CD8-positive, alpha-beta T cell (primary cell): ENCODE measurements at regions of chr10 and their contacts with region 1.

Region 1: DNA sequence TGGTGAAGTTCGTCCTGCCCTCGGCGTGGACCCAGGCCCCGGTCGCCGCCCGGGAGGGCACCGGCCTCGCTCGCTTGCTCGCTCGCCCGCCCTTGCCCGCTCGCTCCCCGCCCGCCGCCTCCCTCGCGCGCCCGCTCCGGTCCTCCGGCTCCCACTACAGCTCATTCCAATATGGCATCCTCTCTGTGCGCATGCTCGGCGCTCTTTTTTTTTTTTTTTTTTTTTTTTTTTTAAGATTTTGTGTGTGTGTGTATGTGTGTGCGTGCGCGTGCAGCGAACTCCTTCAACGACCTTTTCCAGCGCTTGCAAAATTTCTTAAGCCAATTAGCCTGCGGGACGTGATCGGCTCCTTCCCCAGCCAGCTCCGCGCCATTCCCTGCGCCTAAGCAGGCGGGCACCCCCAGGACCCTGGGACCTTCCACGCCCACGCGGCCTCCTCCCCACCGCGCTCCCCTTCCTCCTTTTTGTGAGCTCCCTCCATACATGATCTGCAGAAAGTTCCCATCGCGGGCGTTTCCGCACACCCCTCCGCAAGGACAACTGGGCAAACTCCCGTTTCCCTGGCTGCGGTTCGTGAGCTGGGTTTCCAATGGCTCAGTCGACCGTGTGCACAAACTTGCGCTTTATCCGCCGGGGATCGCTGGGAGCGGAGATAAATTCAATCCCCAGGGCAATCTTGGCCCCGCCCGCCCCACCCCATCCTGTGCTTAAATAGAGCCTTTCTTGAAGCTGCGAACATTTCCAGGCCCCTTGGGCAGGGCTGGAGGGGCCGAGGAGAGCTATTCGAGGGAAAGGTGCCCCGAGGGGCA is at the start of gene SFMBT2:
- DNase-seq: peak in 7 of 9 experiments; percentile 48 to 87 (median 67)
- ATAC-seq: peak; percentile 51
- H3K4me3 ChIP-seq: peak within 1 kb of the TSS; percentile 93 to 96
- H3K4me3 Mint-ChIP-seq: peak within 1 kb of the TSS; percentile 98
- H3K27ac ChIP-seq: peak within 1 kb of the TSS; percentile 52 to 81
- H3K27ac Mint-ChIP-seq: peak within 1 kb of the TSS; percentile 96
- H3K4me1 ChIP-seq: peaks cover 40% of the 10 kb centered on the region
- H3K4me1 Mint-ChIP-seq: peaks cover 44% of the 10 kb centered on the region
- H3K27me3 ChIP-seq: peaks cover 0 to 10% of the 10 kb centered on the region in 2 experiments
- H3K27me3 Mint-ChIP-seq: no peaks in the 10 kb centered on the region
- CTCF ChIP-seq: no peak
- total RNA-seq, gene SFMBT2: 27.5 to 30.3 TPM

Region 2: DNA sequence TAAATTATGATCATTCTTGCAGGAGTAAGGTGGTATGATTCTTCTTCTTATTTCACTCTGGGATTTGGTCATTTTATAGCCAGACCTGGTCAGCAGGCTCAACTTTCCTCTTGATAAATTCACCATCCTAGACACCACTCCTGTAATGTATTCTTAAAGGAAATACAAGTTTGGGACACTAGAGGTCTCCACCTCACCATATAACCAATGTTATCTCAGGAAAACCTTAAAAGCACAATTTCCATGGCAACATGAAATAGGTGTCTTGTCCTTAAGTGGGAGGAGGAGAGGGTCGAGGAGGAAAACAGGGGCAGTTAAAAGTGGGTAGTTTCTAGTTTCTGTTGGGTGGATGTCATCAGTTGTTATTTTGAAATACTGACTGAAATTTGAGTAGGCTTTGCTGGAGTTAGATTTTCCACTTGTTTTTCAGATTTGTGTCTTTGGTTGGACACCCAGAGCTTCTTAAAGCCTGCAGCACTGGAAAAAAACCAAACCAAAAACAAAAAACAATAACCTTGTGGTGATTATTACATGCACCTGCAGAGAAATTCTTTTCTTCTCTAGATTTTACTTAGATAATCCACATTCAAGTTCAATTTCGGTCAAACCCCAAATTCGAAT is 994.1 kb before region 1 on chr10:
- CTCF ChIA-PET with region 1: no interaction called
- POLR2A ChIA-PET with region 1: no interaction called
- intact Hi-C with region 1: loop called (anchors 5 to 10 kb)
- DNase-seq: peak in 2 of 9 experiments; percentile 65 to 75
- ATAC-seq: peak; percentile 72
- H3K4me3 ChIP-seq: no peak overlapping the region
- H3K4me3 Mint-ChIP-seq: no peak overlapping the region
- H3K27ac ChIP-seq: no peak overlapping the region
- H3K27ac Mint-ChIP-seq: no peak overlapping the region
- H3K4me1 ChIP-seq: no peaks in the 10 kb centered on the region
- H3K4me1 Mint-ChIP-seq: no peaks in the 10 kb centered on the region
- H3K27me3 ChIP-seq: no peaks in the 10 kb centered on the region
- H3K27me3 Mint-ChIP-seq: no peaks in the 10 kb centered on the region
- CTCF ChIP-seq: peak; percentile 74

Region 3: GRCh38 chr10:7192831-7193361 is 218.2 kb before region 1 on chr10:
- CTCF ChIA-PET with region 1: interaction called, 3 read pairs
- POLR2A ChIA-PET with region 1: interaction called, 3 read pairs
- intact Hi-C with region 1: loop called (anchors 2 kb)
- DNase-seq: peak; percentile 28 to 87 (median 68)
- ATAC-seq: peak; percentile 87
- H3K4me3 ChIP-seq: peak overlapping the region; percentile 16 to 36
- H3K4me3 Mint-ChIP-seq: peak overlapping the region; percentile 82
- H3K27ac ChIP-seq: peak overlapping the region; percentile 55 to 64
- H3K27ac Mint-ChIP-seq: peak overlapping the region; percentile 98
- H3K4me1 ChIP-seq: peaks cover 66% of the 10 kb centered on the region
- H3K4me1 Mint-ChIP-seq: peaks cover 67% of the 10 kb centered on the region
- H3K27me3 ChIP-seq: no peaks in the 10 kb centered on the region
- H3K27me3 Mint-ChIP-seq: no peaks in the 10 kb centered on the region
- CTCF ChIP-seq: no peak

Region 4: DNA sequence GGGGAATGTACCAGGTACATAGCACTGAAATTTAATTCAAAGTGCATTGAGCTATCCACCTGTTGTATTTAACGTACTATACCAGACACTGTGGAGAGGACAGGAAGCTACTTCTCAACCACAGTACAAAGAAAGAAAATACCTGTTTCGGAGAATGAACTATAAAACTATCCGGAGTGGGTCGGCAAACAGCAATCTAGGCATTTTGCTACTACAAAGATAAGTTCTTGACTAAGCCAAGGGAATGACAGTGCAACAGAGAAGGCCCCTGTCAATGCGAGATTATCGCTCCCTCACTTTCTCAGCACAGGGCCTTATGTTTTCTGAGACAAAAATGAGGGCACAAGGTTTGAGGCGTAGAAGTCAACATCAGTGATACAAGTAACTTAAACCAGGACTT is 27.6 kb before region 1 on chr10:
- CTCF ChIA-PET with region 1: interaction called, 12 read pairs
- POLR2A ChIA-PET with region 1: no interaction called
- intact Hi-C with region 1: loop called in 1 of 2 experiments (anchors 2 kb)
- DNase-seq: peak in 1 of 9 experiments; percentile 30
- ATAC-seq: peak; percentile 71
- H3K4me3 ChIP-seq: no peak overlapping the region
- H3K4me3 Mint-ChIP-seq: peak overlapping the region; percentile 3
- H3K27ac ChIP-seq: no peak overlapping the region
- H3K27ac Mint-ChIP-seq: peak overlapping the region; percentile 84
- H3K4me1 ChIP-seq: peaks cover 28% of the 10 kb centered on the region
- H3K4me1 Mint-ChIP-seq: peaks cover 62% of the 10 kb centered on the region
- H3K27me3 ChIP-seq: no peaks in the 10 kb centered on the region
- H3K27me3 Mint-ChIP-seq: no peaks in the 10 kb centered on the region
- CTCF ChIP-seq: no peak

Region 5: DNA sequence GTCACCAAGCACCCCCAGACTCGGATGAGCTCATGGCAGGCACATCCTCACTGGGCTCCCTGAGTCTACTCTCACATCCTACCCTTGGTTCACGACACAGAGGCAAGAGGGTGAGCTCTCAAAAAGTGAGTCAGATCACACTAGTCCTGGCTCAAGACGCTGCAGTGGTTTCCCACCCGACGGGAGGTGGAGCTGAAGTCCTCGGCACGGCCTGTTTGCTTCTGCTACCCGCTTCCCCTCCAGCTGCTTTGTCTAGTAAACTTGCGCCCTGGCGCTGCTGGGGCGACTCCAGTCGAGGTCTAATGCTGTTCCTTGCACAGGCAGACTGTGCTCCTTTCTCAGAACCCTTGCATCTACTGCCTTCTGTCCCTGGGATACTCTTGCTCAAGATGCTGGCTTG is 13.2 kb after region 1 on chr10:
- CTCF ChIA-PET with region 1: interaction called, 10 read pairs
- POLR2A ChIA-PET with region 1: interaction called, 3 read pairs
- intact Hi-C with region 1: no loop called
- DNase-seq: peak in 6 of 9 experiments; percentile 26 to 70 (median 58)
- ATAC-seq: peak; percentile 91
- H3K4me3 ChIP-seq: no peak overlapping the region
- H3K4me3 Mint-ChIP-seq: no peak overlapping the region
- H3K27ac ChIP-seq: no peak overlapping the region
- H3K27ac Mint-ChIP-seq: peak overlapping the region; percentile 49
- H3K4me1 ChIP-seq: no peaks in the 10 kb centered on the region
- H3K4me1 Mint-ChIP-seq: peaks cover 24% of the 10 kb centered on the region
- H3K27me3 ChIP-seq: no peaks in the 10 kb centered on the region
- H3K27me3 Mint-ChIP-seq: no peaks in the 10 kb centered on the region
- CTCF ChIP-seq: no peak

Region 6: DNA sequence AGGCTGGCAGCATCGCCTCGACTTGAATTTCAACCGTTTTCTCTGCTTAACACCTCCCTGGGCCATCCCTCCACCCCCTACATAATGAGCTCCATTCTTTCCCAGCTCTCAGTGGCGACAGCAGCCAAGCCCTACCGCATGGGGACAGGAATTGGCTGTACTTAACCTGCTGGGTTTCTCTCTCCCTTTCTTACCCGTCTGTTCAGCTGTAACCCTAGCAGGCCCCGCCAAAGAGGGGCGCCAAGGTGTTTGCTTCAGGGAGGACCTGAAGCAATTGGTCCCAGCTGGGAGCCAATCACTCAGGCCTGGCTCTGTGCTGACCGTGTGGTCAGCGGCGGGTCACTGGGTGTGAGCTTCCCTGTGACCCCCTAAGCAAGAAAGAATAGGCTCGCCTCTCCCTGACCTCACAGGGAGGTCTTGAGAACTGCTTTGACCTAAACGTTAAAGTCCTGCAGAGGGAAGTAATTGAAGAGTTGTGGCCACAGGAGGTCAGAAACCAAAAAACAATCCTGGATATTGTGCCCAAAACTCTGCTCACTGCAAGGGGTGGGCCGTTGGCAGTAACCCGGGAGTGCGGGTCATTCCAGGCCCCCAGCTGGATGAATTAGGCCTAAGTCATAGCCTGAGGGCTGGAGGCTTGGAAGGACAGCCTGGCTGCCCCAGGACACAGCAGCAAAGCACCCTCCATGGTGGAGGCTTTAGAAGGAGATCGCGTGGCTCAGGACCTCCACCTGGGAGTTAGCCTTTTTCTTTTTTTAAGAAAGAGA is 141.1 kb after region 1 on chr10:
- CTCF ChIA-PET with region 1: no interaction called
- POLR2A ChIA-PET with region 1: no interaction called
- intact Hi-C with region 1: no loop called
- DNase-seq: no peak
- ATAC-seq: no peak
- H3K4me3 ChIP-seq: no peak overlapping the region
- H3K4me3 Mint-ChIP-seq: no peak overlapping the region
- H3K27ac ChIP-seq: no peak overlapping the region
- H3K27ac Mint-ChIP-seq: no peak overlapping the region
- H3K4me1 ChIP-seq: no peaks in the 10 kb centered on the region
- H3K4me1 Mint-ChIP-seq: no peaks in the 10 kb centered on the region
- H3K27me3 ChIP-seq: no peaks in the 10 kb centered on the region
- H3K27me3 Mint-ChIP-seq: no peaks in the 10 kb centered on the region
- CTCF ChIP-seq: no peak